HepG2 (cell line): ENCODE measurements at regions of chr2 and their contacts with region 1.

Region 1: GRCh38 chr2:120012771-120013596 is at the start of gene EPB41L5:
- DNase-seq: peak; percentile 92
- ATAC-seq: peak; percentile 86
- H3K4me3 ChIP-seq: peak within 1 kb of the TSS; percentile 85 to 88 (median 87)
- H3K27ac ChIP-seq: peak within 1 kb of the TSS; percentile 96
- H3K4me1 ChIP-seq: peaks cover 42% of the 10 kb centered on the region
- H3K27me3 ChIP-seq: no peaks in the 10 kb centered on the region; a peak in 2 of 5 replicates
- CTCF ChIP-seq: peak; percentile 40
- EP300 ChIP-seq: peak in 1 of 2 experiments; percentile 47; a peak in 3 of 4 replicates
- POLR2A ChIP-seq: peak; percentile 98
- RAD21 ChIP-seq: peak; percentile 72
- total RNA-seq, gene EPB41L5: 47.5 and 64.6 TPM in 2 replicates

Region 2: GRCh38 chr2:119694845-119695521 is 318.0 kb before region 1 on chr2:
- CTCF ChIA-PET with region 1: no interaction called
- POLR2A ChIA-PET with region 1: no interaction called
- in situ Hi-C with region 1: no loop called
- intact Hi-C with region 1: no loop called
- DNase-seq: peak; percentile 66
- ATAC-seq: peak; percentile 35
- H3K4me3 ChIP-seq: peak overlapping the region in 2 of 3 experiments; percentile 29 to 54; a peak in 4 of 6 replicates
- H3K27ac ChIP-seq: peak overlapping the region; percentile 1
- H3K4me1 ChIP-seq: peaks cover 90% of the 10 kb centered on the region
- H3K27me3 ChIP-seq: no peaks in the 10 kb centered on the region
- CTCF ChIP-seq: no peak
- EP300 ChIP-seq: no peak
- POLR2A ChIP-seq: no peak
- RAD21 ChIP-seq: no peak

Region 3: GRCh38 chr2:119759451-119760236 is 253.3 kb before region 1 on chr2 and contains the start of gene PTPN4:
- CTCF ChIA-PET with region 1: no interaction called
- POLR2A ChIA-PET with region 1: interaction called, 3 read pairs
- in situ Hi-C with region 1: no loop called
- intact Hi-C with region 1: loop called (anchors 2 kb)
- DNase-seq: peak; percentile 99
- ATAC-seq: peak; percentile 95
- H3K4me3 ChIP-seq: peak within 1 kb of the TSS; percentile 84 to 97 (median 87)
- H3K27ac ChIP-seq: peak within 1 kb of the TSS; percentile 91
- H3K4me1 ChIP-seq: peaks cover 57% of the 10 kb centered on the region
- H3K27me3 ChIP-seq: no peaks in the 10 kb centered on the region; a peak in 1 of 5 replicates
- CTCF ChIP-seq: peak; percentile 53
- EP300 ChIP-seq: peak; percentile 11 to 64; a peak in 3 of 4 replicates
- POLR2A ChIP-seq: peak; percentile 96
- RAD21 ChIP-seq: 0 out of 2 replicates have a peak, but pooled peaks have one; percentile 32
- total RNA-seq, gene PTPN4: 34.6 and 40.4 TPM in 2 replicates

Region 4: DNA sequence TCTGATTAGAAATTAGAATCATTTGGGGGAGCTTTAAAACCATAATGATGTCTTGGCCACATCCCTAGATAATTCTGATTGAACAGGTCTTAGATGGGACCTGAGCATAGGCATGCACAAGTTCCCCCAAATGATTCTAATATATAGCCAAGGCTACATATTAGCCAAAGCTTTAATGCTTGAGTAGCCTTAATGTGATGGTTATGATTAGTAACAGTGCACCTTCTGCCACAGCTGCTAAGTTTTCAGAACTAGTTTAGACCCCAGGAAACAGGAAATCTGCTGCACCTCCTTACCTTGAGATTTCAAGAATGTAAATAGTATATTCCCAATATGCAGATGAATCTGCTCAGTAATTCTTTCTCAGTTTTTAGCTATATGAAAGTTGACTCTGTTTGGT is 133.5 kb before region 1 on chr2:
- CTCF ChIA-PET with region 1: no interaction called
- POLR2A ChIA-PET with region 1: no interaction called
- in situ Hi-C with region 1: no loop called
- intact Hi-C with region 1: no loop called
- DNase-seq: no peak
- ATAC-seq: no peak
- H3K4me3 ChIP-seq: no peak overlapping the region
- H3K27ac ChIP-seq: no peak overlapping the region
- H3K4me1 ChIP-seq: no peaks in the 10 kb centered on the region
- H3K27me3 ChIP-seq: no peaks in the 10 kb centered on the region
- CTCF ChIP-seq: no peak
- EP300 ChIP-seq: no peak
- POLR2A ChIP-seq: no peak
- RAD21 ChIP-seq: no peak

Region 5: DNA sequence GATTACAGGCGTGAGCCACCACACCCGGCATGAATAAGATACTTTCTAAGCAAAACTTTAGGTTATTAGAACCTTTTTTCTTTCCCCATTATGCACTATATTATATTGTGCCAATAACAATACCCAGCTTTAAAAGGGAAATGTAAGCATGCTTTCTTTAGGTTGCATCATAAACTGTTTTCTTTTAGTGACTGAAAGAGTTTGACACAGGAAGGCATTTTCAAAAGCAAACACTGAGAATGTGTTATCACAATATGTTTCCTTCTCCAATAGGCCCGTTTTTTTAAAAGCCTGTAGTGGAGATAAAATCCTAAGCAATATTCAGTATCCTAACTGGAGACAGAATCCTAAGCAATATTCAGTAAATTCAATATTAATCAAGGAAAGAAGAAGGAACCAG is 16.8 kb before region 1 on chr2:
- CTCF ChIA-PET with region 1: no interaction called
- POLR2A ChIA-PET with region 1: interaction called, 16 read pairs
- in situ Hi-C with region 1: no loop called
- intact Hi-C with region 1: no loop called
- DNase-seq: peak; percentile 32
- ATAC-seq: no peak
- H3K4me3 ChIP-seq: no peak overlapping the region
- H3K27ac ChIP-seq: no peak overlapping the region
- H3K4me1 ChIP-seq: peaks cover 19% of the 10 kb centered on the region
- H3K27me3 ChIP-seq: no peaks in the 10 kb centered on the region
- CTCF ChIP-seq: no peak
- EP300 ChIP-seq: peak in 1 of 2 experiments; percentile 60; a peak in 1 of 4 replicates
- POLR2A ChIP-seq: no peak
- RAD21 ChIP-seq: no peak

Region 6: GRCh38 chr2:120037995-120038541 is 25.1 kb after region 1 on chr2:
- CTCF ChIA-PET with region 1: no interaction called
- POLR2A ChIA-PET with region 1: no interaction called
- in situ Hi-C with region 1: no loop called
- intact Hi-C with region 1: loop called (anchors 2 kb)
- DNase-seq: no peak
- ATAC-seq: no peak
- H3K4me3 ChIP-seq: no peak overlapping the region
- H3K27ac ChIP-seq: no peak overlapping the region
- H3K4me1 ChIP-seq: peaks cover 13% of the 10 kb centered on the region
- H3K27me3 ChIP-seq: no peaks in the 10 kb centered on the region
- CTCF ChIP-seq: no peak
- EP300 ChIP-seq: no peak
- POLR2A ChIP-seq: no peak
- RAD21 ChIP-seq: no peak

Region 7: DNA sequence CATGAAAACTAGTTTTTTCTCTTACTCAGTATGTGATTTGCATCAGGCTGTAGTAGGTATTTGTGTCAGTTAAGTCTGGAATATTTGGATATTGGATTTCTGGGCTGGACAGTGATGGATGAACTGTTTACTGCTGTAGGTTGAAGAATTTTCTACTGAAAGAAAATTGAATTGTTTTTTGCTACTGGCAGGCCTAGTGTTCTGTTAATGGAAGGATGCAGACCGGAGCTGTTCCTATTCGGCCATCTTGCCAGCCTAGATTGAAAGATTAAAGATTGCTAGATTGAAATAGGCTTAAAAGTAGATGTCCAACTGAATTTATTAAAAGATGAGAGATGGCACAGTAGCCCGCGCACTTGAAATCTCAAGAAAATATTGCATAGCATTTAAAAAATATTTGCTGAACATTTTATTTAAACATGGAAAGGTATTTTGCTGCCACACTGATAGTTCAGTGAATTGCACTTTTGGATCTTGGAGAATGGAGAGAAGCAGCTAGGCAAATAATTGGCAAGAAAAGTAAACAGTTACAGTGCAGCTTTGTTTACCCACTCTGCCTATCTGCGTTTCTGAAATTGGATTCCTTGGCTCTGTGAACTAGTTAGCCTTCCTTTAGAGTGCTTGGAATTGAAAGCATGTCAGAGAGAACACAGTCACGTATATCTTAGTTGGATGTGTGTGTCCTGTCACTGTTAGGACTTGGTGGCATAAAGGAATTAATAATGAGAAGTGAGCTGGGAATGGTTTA is 54.0 kb after region 1 on chr2:
- CTCF ChIA-PET with region 1: no interaction called
- POLR2A ChIA-PET with region 1: interaction called, 16 read pairs
- in situ Hi-C with region 1: no loop called
- intact Hi-C with region 1: loop called (anchors 5 kb)
- DNase-seq: peak; percentile 98
- ATAC-seq: peak; percentile 98
- H3K4me3 ChIP-seq: peak overlapping the region; percentile 30 to 43 (median 36); a peak in 5 of 6 replicates
- H3K27ac ChIP-seq: peak overlapping the region; percentile 77
- H3K4me1 ChIP-seq: peaks cover 70% of the 10 kb centered on the region
- H3K27me3 ChIP-seq: no peaks in the 10 kb centered on the region
- CTCF ChIP-seq: peak; percentile 26; the same call in 1 of the 2 replicates
- EP300 ChIP-seq: peak in 1 of 2 experiments; percentile 95; a peak in 3 of 4 replicates
- POLR2A ChIP-seq: no peak; a peak in 1 of 4 replicates
- RAD21 ChIP-seq: 0 out of 2 replicates have a peak, but pooled peaks have one; percentile 16

Region 8: DNA sequence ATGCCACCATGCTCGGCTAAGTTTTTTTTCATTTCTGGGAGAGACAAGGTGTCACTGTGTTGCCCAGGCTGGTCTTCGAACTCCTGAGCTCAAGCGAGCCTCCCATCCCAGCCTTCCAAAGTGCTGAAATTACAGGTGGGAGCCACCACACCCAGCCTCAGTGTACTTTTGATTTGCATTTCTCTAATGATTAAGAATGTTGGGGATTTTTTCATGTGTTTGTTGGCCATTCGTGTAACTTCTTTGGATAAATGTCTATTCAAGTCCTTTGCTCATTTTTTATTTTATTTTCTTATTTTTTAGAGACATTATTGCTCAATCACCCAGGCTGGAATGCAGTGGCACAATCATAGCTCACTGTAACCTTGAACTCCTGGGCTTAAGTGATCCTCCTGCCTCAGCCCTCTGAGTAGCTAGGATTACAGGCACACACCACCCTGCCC is 137.1 kb after region 1 on chr2:
- CTCF ChIA-PET with region 1: no interaction called
- POLR2A ChIA-PET with region 1: interaction called, 10 read pairs
- in situ Hi-C with region 1: no loop called
- intact Hi-C with region 1: no loop called
- DNase-seq: peak; percentile 79
- ATAC-seq: peak; percentile 93
- H3K4me3 ChIP-seq: no peak overlapping the region
- H3K27ac ChIP-seq: peak overlapping the region; percentile 59
- H3K4me1 ChIP-seq: peaks cover 16% of the 10 kb centered on the region
- H3K27me3 ChIP-seq: no peaks in the 10 kb centered on the region
- CTCF ChIP-seq: no peak
- EP300 ChIP-seq: peak; percentile 43 to 49; a peak in 2 of 4 replicates
- POLR2A ChIP-seq: no peak
- RAD21 ChIP-seq: no peak

Region 9: DNA sequence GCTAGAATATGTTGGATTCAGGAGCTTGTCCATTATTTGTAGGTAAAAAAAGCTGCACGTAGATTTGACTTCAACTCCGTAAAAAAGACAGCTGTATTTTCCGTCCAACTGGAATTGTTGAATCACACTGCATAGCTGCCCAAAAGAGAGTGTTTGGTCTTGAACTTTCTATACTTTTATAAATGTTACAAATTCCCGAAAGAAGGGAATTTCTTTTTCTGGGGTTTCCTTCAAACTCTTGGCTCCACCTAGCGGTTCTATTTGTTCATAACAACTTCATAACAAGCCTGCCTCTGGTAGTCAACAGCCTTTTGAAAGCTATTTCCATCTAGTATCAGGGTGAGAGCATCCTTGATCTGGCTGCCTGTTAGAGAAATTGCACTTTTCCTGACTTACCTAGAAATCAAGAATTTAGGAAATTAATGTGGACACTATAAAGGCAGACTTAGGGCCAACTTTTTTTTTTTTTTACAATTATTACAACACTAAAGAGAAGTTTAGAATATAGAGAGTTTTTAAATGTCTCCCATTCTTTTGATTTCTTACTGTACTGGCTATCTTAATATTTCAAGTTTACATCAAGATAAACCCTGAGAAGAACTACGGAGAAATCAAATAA is 162.1 kb after region 1 on chr2:
- CTCF ChIA-PET with region 1: no interaction called
- POLR2A ChIA-PET with region 1: no interaction called
- in situ Hi-C with region 1: no loop called
- intact Hi-C with region 1: loop called (anchors 2 kb)
- DNase-seq: peak; percentile 70
- ATAC-seq: peak; percentile 72
- H3K4me3 ChIP-seq: no peak overlapping the region
- H3K27ac ChIP-seq: no peak overlapping the region
- H3K4me1 ChIP-seq: no peaks in the 10 kb centered on the region
- H3K27me3 ChIP-seq: no peaks in the 10 kb centered on the region
- CTCF ChIP-seq: peak; percentile 79
- EP300 ChIP-seq: no peak
- POLR2A ChIP-seq: no peak
- RAD21 ChIP-seq: peak; percentile 80